Naive thymus-derived CD4-positive, alpha-beta T cell (primary cell): ENCODE measurements at regions of chr11 and their contacts with region 1.

Region 1: GRCh38 chr11:83156150-83156995 is 558 bp upstream of the PCF11 start:
- DNase-seq: peak in 7 of 9 donors; percentile 89 to 99 (median 98)
- ATAC-seq: peak; percentile 92
- H3K4me3 ChIP-seq: peak overlapping the region; percentile 90
- H3K4me3 Mint-ChIP-seq: peak overlapping the region; percentile 96 to 100 (median 99)
- H3K27ac ChIP-seq: peak overlapping the region; percentile 98
- H3K27ac Mint-ChIP-seq: peak overlapping the region; percentile 98 to 100 (median 100)
- H3K4me1 ChIP-seq: peaks cover under 1 to 18% of the 10 kb centered on the region in 2 donors
- H3K4me1 Mint-ChIP-seq: peaks cover 11 to 33% (median 23%) of the 10 kb centered on the region in 7 donors
- H3K27me3 ChIP-seq: no peaks in the 10 kb centered on the region
- H3K27me3 Mint-ChIP-seq: peaks cover 0 to 3% (median 0%) of the 10 kb centered on the region in 5 donors

Region 2: GRCh38 chr11:82867495-82868082 is 288.8 kb before region 1 on chr11:
- CTCF ChIA-PET with region 1: no interaction called
- POLR2A ChIA-PET with region 1: interaction called, 4 read pairs
- intact Hi-C with region 1: loop called in 1 of 2 experiments (anchors 1 kb)
- DNase-seq: peak; percentile 47 to 78 (median 73)
- ATAC-seq: peak; percentile 84
- H3K4me3 ChIP-seq: no peak overlapping the region
- H3K4me3 Mint-ChIP-seq: peak overlapping the region in 8 of 10 donors; percentile 22 to 78 (median 60)
- H3K27ac ChIP-seq: no peak overlapping the region
- H3K27ac Mint-ChIP-seq: peak overlapping the region in 5 of 9 donors; percentile 4 to 67 (median 33)
- H3K4me1 ChIP-seq: peaks cover 0 to 4% of the 10 kb centered on the region in 2 donors
- H3K4me1 Mint-ChIP-seq: peaks cover 3 to 12% (median 11%) of the 10 kb centered on the region in 7 donors
- H3K27me3 ChIP-seq: no peaks in the 10 kb centered on the region
- H3K27me3 Mint-ChIP-seq: peaks cover 0 to 7% (median 0%) of the 10 kb centered on the region in 5 donors

Region 3: GRCh38 chr11:82959987-82960778 is 196.2 kb before region 1 on chr11:
- CTCF ChIA-PET with region 1: no interaction called
- POLR2A ChIA-PET with region 1: interaction called, 48 read pairs
- intact Hi-C with region 1: loop called (anchors 1 kb)
- DNase-seq: peak in 7 of 9 donors; percentile 71 to 89 (median 86)
- ATAC-seq: peak; percentile 92
- H3K4me3 ChIP-seq: peak overlapping the region; percentile 37
- H3K4me3 Mint-ChIP-seq: peak overlapping the region; percentile 52 to 88 (median 80)
- H3K27ac ChIP-seq: peak overlapping the region; percentile 74
- H3K27ac Mint-ChIP-seq: peak overlapping the region; percentile 84 to 99 (median 98)
- H3K4me1 ChIP-seq: peaks cover 49 to 82% of the 10 kb centered on the region in 2 donors
- H3K4me1 Mint-ChIP-seq: peaks cover 37 to 96% (median 90%) of the 10 kb centered on the region in 7 donors
- H3K27me3 ChIP-seq: no peaks in the 10 kb centered on the region
- H3K27me3 Mint-ChIP-seq: peaks cover 0 to 8% (median 0%) of the 10 kb centered on the region in 5 donors

Region 4: DNA sequence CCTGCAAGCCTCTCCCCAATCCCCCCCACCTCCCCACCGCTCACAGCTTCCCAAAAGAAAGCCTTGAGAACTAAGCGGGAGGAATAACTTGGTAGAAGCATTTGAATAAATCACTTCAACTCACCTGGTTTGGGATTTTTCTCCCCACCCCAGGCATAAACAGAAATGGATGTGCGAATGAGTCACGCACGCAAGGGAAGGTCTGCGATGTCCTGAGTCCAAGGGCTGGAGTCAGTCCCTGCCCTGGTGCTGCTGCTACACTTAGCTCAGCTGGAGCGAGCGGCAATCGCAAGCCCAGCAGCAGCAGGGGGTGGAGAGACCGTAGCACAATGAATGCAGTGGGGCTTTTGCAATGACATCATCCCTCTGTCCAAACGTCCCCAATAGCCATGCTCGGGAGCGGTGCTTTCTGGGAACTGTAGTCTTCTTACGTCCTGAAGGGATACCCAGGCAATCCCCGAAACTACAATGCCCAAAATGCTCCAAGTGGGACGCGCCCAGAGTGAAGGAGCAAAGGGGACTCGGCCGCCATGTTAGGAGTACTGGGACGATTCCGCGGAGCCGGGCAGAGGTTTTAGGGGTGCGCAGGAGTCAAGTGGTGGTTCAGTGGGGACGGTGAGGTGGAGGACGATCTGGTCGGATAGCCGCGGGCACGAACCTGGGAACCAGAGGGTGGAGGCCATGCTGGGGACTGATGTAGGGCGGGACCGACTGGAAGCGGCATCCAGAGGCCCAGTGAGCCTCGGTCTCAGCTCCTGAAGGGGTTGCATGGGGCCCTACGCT is 84.6 kb before region 1 on chr11 and contains the start of gene RAB30:
- CTCF ChIA-PET with region 1: interaction called, 5 read pairs
- POLR2A ChIA-PET with region 1: interaction called, 140 read pairs
- intact Hi-C with region 1: loop called (anchors 1 kb)
- DNase-seq: peak; percentile 72 to 98 (median 92)
- ATAC-seq: peak; percentile 97
- H3K4me3 ChIP-seq: peak within 1 kb of the TSS; percentile 89
- H3K4me3 Mint-ChIP-seq: no peak within 1 kb of the TSS
- H3K27ac ChIP-seq: peak within 1 kb of the TSS; percentile 92
- H3K27ac Mint-ChIP-seq: no peak within 1 kb of the TSS
- H3K4me1 ChIP-seq: peaks cover 26 to 33% of the 10 kb centered on the region in 2 donors
- H3K4me1 Mint-ChIP-seq: peaks cover 0 to 43% (median 19%) of the 10 kb centered on the region in 7 donors
- H3K27me3 ChIP-seq: no peaks in the 10 kb centered on the region
- H3K27me3 Mint-ChIP-seq: peaks cover 0 to 4% (median 0%) of the 10 kb centered on the region in 5 donors
- total RNA-seq, gene RAB30: 7.4 to 50.2 (median 24.7) TPM

Region 5: GRCh38 chr11:83140696-83141455 is 15.5 kb before region 1 on chr11:
- CTCF ChIA-PET with region 1: interaction called, 7 read pairs
- POLR2A ChIA-PET with region 1: interaction called, 11 read pairs
- intact Hi-C with region 1: no loop called
- DNase-seq: no peak
- ATAC-seq: no peak
- H3K4me3 ChIP-seq: no peak overlapping the region
- H3K4me3 Mint-ChIP-seq: no peak overlapping the region
- H3K27ac ChIP-seq: no peak overlapping the region
- H3K27ac Mint-ChIP-seq: peak overlapping the region in 1 of 9 donors; percentile 3
- H3K4me1 ChIP-seq: no peaks in the 10 kb centered on the region
- H3K4me1 Mint-ChIP-seq: peaks cover 0 to 2% (median 0%) of the 10 kb centered on the region in 7 donors
- H3K27me3 ChIP-seq: no peaks in the 10 kb centered on the region
- H3K27me3 Mint-ChIP-seq: peaks cover 0 to 7% (median 0%) of the 10 kb centered on the region in 5 donors

Region 6: DNA sequence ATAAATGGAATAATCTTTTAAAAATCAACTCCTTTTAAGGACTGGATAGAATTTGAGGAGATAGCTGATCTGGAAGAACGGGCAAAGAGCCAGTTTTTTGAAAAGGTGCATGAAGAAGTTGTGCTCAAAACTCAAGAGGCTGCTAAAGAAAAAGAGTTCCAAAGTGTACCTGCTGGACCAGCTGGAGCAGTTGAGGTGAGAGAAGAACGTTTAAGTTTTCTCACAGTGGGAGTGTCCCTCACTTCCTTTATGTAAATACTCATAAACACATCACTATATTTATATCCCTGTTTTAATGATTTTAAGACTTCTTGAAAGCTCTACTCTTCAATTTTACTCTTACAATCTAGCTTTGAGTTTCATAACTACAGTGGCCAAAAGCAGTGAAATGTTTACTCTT is 25.4 kb after region 1 on chr11:
- CTCF ChIA-PET with region 1: no interaction called
- POLR2A ChIA-PET with region 1: interaction called, 20 read pairs
- intact Hi-C with region 1: loop called in 1 of 2 experiments (anchors 2 kb)
- DNase-seq: no peak
- ATAC-seq: no peak
- H3K4me3 ChIP-seq: no peak overlapping the region
- H3K4me3 Mint-ChIP-seq: no peak overlapping the region
- H3K27ac ChIP-seq: peak overlapping the region; percentile 7
- H3K27ac Mint-ChIP-seq: peak overlapping the region in 8 of 9 donors; percentile 2 to 74 (median 56)
- H3K4me1 ChIP-seq: peaks cover 3 to 6% of the 10 kb centered on the region in 2 donors
- H3K4me1 Mint-ChIP-seq: peaks cover 11 to 33% (median 32%) of the 10 kb centered on the region in 7 donors
- H3K27me3 ChIP-seq: no peaks in the 10 kb centered on the region
- H3K27me3 Mint-ChIP-seq: no peaks in the 10 kb centered on the region

Region 7: DNA sequence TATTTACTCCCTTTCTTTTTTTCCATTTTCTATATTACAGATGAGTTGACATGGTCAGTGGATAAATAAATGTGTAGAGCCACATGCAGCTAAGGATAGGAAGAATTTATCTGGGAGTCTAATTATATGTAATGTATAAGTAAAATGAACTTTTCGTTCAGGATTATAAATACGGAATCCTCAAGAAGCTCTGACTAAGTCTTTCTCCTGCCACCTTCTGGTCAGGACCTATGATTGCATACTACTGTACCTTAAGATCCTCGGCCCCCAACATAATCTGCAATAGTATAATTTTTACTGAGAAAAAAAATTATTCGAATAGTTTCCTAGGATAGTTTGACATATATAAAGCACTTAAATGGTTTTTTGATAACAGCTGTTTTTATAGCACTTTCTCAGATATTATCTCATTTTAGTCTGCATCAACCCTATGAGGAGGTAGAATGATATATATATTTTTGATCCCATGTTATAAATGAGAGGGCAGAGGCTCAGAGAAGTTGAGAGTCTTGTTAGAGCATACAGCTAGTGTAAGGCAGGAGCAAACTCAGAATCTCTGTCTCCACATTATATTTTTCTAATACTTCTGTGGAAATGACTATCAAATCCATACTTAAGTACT is 93.7 kb after region 1 on chr11:
- CTCF ChIA-PET with region 1: interaction called, 9 read pairs
- POLR2A ChIA-PET with region 1: interaction called, 15 read pairs
- intact Hi-C with region 1: loop called in 1 of 2 experiments (anchors 1 kb)
- DNase-seq: peak in 7 of 9 donors; percentile 12 to 48 (median 40)
- ATAC-seq: peak; percentile 77
- H3K4me3 ChIP-seq: no peak overlapping the region
- H3K4me3 Mint-ChIP-seq: peak overlapping the region in 1 of 10 donors; percentile 32
- H3K27ac ChIP-seq: no peak overlapping the region
- H3K27ac Mint-ChIP-seq: no peak overlapping the region
- H3K4me1 ChIP-seq: no peaks in the 10 kb centered on the region
- H3K4me1 Mint-ChIP-seq: peaks cover 0 to 7% (median 0%) of the 10 kb centered on the region in 7 donors
- H3K27me3 ChIP-seq: no peaks in the 10 kb centered on the region
- H3K27me3 Mint-ChIP-seq: no peaks in the 10 kb centered on the region